Lower lobe of right lung (tissue), 2 donors: ENCODE measurements at regions of chr6 and their contacts with region 1.

Region 1: GRCh38 chr6:2841264-2842138 is at the start of gene SERPINB1:
- DNase-seq: peak; percentile 98
- ATAC-seq: peak; percentile 94 to 96
- H3K4me3 ChIP-seq: peak within 1 kb of the TSS; percentile 59
- H3K27ac ChIP-seq: peak within 1 kb of the TSS; percentile 98
- H3K4me1 ChIP-seq: peaks cover 57% of the 10 kb centered on the region
- H3K27me3 ChIP-seq: no peaks in the 10 kb centered on the region
- CTCF ChIP-seq: no peak
- total RNA-seq, gene SERPINB1: 125 TPM

Region 2: GRCh38 chr6:2376429-2377355 is 464.8 kb before region 1 on chr6:
- intact Hi-C with region 1: no loop called
- DNase-seq: no peak
- ATAC-seq: no peak
- H3K4me3 ChIP-seq: no peak overlapping the region
- H3K27ac ChIP-seq: no peak overlapping the region
- H3K4me1 ChIP-seq: no peaks in the 10 kb centered on the region
- H3K27me3 ChIP-seq: no peaks in the 10 kb centered on the region
- CTCF ChIP-seq: no peak

Region 3: DNA sequence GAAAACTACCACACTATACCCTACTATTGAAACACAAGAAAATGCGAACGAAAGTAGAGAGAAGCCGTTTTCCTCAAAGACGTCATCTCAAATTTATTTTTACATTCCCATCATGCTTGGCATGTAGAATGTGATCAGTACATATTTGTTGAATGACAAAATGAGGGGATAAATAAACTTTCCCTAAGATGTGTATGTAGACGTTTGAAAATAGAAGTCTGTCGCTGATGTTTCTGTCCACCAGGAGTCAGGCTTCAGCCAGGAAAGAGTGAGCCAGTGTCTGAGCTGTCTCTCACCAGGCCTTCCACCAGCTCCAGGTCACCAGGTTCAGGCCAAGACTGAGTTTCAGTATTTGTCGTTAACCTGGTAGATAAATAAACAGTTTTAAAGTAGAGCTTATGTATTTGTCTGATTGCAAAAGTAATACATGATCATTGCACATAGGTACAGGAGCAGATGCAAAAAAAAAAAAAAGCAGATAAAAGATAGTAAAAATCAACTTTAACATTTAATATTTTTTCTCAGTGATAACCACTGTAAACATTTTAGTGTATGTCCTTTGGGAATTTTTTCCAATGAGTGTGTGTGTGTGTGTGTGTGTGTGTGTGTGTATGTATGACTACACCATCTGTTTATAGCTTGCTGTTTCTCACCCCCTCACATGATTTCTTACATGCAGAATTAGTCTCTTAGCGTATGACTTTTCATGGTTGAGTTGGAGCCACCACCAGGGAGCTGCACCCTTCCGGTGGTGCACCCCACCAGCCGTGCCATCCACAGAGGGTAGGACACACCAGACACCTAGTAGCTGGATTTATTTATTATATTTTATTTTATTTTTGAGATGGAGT is 50.2 kb before region 1 on chr6:
- intact Hi-C with region 1: loop called (anchors 10 kb)
- DNase-seq: peak; percentile 69
- ATAC-seq: peak; percentile 87 to 93
- H3K4me3 ChIP-seq: no peak overlapping the region
- H3K27ac ChIP-seq: peak overlapping the region; percentile 75
- H3K4me1 ChIP-seq: peaks cover 52% of the 10 kb centered on the region
- H3K27me3 ChIP-seq: no peaks in the 10 kb centered on the region
- CTCF ChIP-seq: peak; percentile 82

Region 4: DNA sequence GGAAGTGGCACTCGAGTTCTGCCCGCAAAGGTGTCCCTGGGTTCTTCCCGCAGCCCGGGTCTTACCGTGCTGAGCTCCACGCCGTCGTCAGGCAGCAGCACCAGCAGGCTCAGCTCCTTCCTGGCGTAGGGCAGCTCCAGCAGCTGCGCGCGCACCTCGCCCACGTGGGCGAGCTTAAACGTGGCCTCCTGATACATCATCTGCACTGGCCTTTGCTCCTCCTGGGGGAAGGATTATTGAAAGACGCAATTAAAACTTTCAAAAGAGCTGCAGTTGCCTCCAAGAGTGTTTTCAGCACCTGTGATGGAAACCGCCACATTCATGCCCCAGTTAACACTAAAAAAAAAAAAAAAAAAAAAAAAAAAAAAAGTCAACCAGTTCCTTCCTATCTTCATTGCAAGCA is 50.3 kb after region 1 on chr6:
- intact Hi-C with region 1: no loop called
- DNase-seq: no peak
- ATAC-seq: peak in 1 of 2 donors; percentile 51
- H3K4me3 ChIP-seq: no peak overlapping the region
- H3K27ac ChIP-seq: no peak overlapping the region
- H3K4me1 ChIP-seq: no peaks in the 10 kb centered on the region
- H3K27me3 ChIP-seq: no peaks in the 10 kb centered on the region
- CTCF ChIP-seq: no peak

Region 5: DNA sequence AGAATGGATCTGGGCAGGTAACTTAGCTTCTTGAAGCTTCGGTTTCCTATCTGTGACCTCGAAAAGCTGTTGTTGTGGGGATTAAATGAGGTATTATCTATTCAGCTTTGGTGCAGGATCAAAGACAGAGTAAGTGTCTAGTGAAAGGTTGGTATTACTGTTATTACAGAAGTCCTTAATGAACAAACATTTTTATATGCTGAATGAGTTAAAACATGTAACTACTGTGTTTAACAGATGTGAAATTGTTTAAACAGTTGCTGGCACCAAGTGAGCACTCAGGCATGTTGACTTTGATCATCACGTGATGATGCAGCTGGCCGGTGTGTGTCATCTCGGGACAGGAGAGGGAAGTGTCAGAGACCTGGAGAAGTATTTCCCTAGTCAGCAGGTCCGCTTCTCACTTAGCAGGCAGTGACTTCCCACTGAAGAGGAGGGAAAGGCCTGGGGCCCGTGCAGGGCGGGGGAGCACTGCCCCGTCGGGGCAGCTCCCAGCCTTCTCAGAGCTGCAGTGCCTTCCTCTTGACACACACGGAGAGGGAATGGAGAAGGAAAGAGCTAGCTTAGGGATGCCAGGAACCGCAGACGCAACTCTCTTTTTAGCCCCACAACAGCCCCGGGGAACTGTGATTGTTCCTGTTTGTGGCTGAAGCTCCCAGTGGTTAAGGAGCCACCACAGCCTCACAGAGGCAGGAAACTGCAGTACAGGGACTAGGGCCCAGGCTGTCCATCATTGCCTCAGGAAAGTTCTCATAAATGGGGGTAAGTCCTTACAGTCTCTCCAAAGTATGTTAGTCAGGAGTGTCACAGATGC is 297.8 kb after region 1 on chr6:
- intact Hi-C with region 1: no loop called
- DNase-seq: peak; percentile 61
- ATAC-seq: peak; percentile 88 to 93
- H3K4me3 ChIP-seq: no peak overlapping the region
- H3K27ac ChIP-seq: peak overlapping the region; percentile 1
- H3K4me1 ChIP-seq: peaks cover 16% of the 10 kb centered on the region
- H3K27me3 ChIP-seq: no peaks in the 10 kb centered on the region
- CTCF ChIP-seq: no peak